ENCODE measurements at regions of chr20 and their contacts with region 1.

Region 1: GRCh38 chr20:58650776-58651558 is at the start of gene STX16:
- DNase-seq: peak; percentile 76 to 95 (median 86)
- ATAC-seq: peak; percentile 66
- H3K4me3 ChIP-seq: peak within 1 kb of the TSS; percentile 74
- H3K4me3 Mint-ChIP-seq: peak within 1 kb of the TSS; percentile 99
- H3K27ac ChIP-seq: peak within 1 kb of the TSS; percentile 91 to 93
- H3K27ac Mint-ChIP-seq: peak within 1 kb of the TSS; percentile 100
- H3K4me1 ChIP-seq: peaks cover 37% of the 10 kb centered on the region
- H3K4me1 Mint-ChIP-seq: peaks cover 28% of the 10 kb centered on the region
- H3K27me3 ChIP-seq: no peaks in the 10 kb centered on the region
- H3K27me3 Mint-ChIP-seq: no peaks in the 10 kb centered on the region
- CTCF ChIP-seq: peak; percentile 76
- total RNA-seq, gene STX16: 179 to 181 TPM

Region 2: GRCh38 chr20:57351042-57351783 is 1299.8 kb before region 1 on chr20 and contains the start of gene RAE1:
- CTCF ChIA-PET with region 1: no interaction called
- POLR2A ChIA-PET with region 1: no interaction called
- intact Hi-C with region 1: loop called in 1 of 2 experiments (anchors 5 kb)
- DNase-seq: peak; percentile 82 to 97 (median 89)
- ATAC-seq: peak; percentile 82
- H3K4me3 ChIP-seq: peak within 1 kb of the TSS; percentile 98
- H3K4me3 Mint-ChIP-seq: peak within 1 kb of the TSS; percentile 94
- H3K27ac ChIP-seq: peak within 1 kb of the TSS; percentile 73 to 74
- H3K27ac Mint-ChIP-seq: peak within 1 kb of the TSS; percentile 89
- H3K4me1 ChIP-seq: peaks cover 21% of the 10 kb centered on the region
- H3K4me1 Mint-ChIP-seq: peaks cover 55% of the 10 kb centered on the region
- H3K27me3 ChIP-seq: no peaks in the 10 kb centered on the region
- H3K27me3 Mint-ChIP-seq: no peaks in the 10 kb centered on the region
- CTCF ChIP-seq: no peak
- total RNA-seq, gene RAE1: 58.8 to 60.7 TPM

Region 3: DNA sequence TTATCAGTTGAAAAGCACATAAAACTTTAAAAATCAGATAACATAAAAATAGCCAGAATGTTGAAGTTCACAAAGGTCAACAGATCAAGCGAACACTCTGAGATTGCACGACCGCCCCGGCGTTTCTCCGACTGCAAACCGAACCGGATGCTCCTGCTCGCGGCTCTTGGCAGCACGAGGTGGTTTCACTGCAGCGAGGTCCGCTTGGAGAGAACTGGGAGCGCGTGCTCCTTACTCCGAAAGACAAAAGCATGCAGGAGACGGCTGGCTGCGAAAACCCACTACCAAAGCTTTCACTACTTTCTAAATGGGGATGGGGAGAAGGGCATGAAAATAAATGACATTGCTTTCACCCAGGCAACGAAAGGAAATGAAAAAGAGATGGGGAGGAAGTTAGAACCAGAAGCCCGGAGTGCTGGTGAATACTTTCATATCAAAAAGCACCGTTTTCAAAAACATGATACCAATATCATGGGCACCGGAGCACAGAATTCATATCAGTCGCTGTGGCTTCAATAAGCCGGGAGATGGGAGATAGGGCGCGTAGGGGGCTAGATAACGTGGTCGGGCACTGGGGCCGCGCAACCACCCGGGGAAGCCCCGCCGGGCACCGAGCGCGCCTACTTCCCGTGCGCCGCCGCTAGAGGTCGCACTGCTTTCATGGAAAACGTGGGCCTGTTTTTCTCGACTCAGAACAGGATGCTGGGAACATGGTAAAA is 414.2 kb before region 1 on chr20:
- CTCF ChIA-PET with region 1: no interaction called
- POLR2A ChIA-PET with region 1: interaction called, 6 read pairs
- intact Hi-C with region 1: loop called (anchors 2 to 5 kb)
- DNase-seq: peak; percentile 66 to 90 (median 82)
- ATAC-seq: peak; percentile 87
- H3K4me3 ChIP-seq: peak overlapping the region; percentile 71
- H3K4me3 Mint-ChIP-seq: peak overlapping the region; percentile 88
- H3K27ac ChIP-seq: peak overlapping the region; percentile 58 to 66
- H3K27ac Mint-ChIP-seq: peak overlapping the region; percentile 77
- H3K4me1 ChIP-seq: peaks cover 9% of the 10 kb centered on the region
- H3K4me1 Mint-ChIP-seq: peaks cover 13% of the 10 kb centered on the region
- H3K27me3 ChIP-seq: no peaks in the 10 kb centered on the region
- H3K27me3 Mint-ChIP-seq: no peaks in the 10 kb centered on the region
- CTCF ChIP-seq: peak; percentile 99

Region 4: DNA sequence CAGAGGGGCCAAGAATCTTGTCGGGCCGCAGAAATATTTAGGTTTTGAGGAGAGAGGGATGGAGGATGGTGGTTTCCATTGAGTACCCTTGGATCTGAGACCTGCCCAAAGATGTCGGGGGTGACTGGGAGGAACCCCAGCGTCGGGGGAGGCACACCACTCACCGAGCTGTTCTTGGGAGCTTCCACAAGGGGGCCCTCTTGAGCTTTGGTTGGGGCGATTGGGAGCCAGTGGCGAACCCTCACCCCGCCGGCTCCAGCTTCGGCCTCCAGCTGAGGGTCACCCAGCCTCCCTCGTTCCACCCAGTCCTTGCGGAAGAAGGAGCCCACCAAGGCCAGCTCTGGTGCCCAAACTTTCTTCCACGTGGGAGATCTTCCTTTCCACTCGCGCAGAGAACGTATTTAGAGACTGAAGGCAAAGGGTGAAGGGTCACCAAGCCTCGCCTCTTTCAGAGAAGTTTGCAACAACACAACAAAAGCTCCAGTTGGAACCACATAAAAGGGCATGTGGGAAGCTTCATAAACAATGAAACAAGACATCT is 169.4 kb before region 1 on chr20:
- CTCF ChIA-PET with region 1: interaction called, 10 read pairs
- POLR2A ChIA-PET with region 1: no interaction called
- intact Hi-C with region 1: no loop called
- DNase-seq: peak in 13 of 14 experiments; percentile 4 to 80 (median 54)
- ATAC-seq: no peak
- H3K4me3 ChIP-seq: no peak overlapping the region
- H3K4me3 Mint-ChIP-seq: no peak overlapping the region
- H3K27ac ChIP-seq: no peak overlapping the region
- H3K27ac Mint-ChIP-seq: no peak overlapping the region
- H3K4me1 ChIP-seq: peaks cover 6% of the 10 kb centered on the region
- H3K4me1 Mint-ChIP-seq: no peaks in the 10 kb centered on the region
- H3K27me3 ChIP-seq: no peaks in the 10 kb centered on the region
- H3K27me3 Mint-ChIP-seq: peaks cover 37% of the 10 kb centered on the region
- CTCF ChIP-seq: no peak

Region 5: GRCh38 chr20:58839474-58839874 is 188.5 kb after region 1 on chr20:
- CTCF ChIA-PET with region 1: interaction called, 5 read pairs
- POLR2A ChIA-PET with region 1: interaction called, 4 read pairs
- intact Hi-C with region 1: loop called in 1 of 2 experiments (anchors 5 kb)
- DNase-seq: peak in 12 of 14 experiments; percentile 19 to 68 (median 42)
- ATAC-seq: peak; percentile 64
- H3K4me3 ChIP-seq: peak overlapping the region; percentile 19
- H3K4me3 Mint-ChIP-seq: no peak overlapping the region
- H3K27ac ChIP-seq: no peak overlapping the region
- H3K27ac Mint-ChIP-seq: no peak overlapping the region
- H3K4me1 ChIP-seq: peaks cover 11% of the 10 kb centered on the region
- H3K4me1 Mint-ChIP-seq: peaks cover 5% of the 10 kb centered on the region
- H3K27me3 ChIP-seq: peaks cover 19 to 26% of the 10 kb centered on the region in 2 experiments
- H3K27me3 Mint-ChIP-seq: peaks cover 72% of the 10 kb centered on the region
- CTCF ChIP-seq: peak; percentile 20

Region 6: DNA sequence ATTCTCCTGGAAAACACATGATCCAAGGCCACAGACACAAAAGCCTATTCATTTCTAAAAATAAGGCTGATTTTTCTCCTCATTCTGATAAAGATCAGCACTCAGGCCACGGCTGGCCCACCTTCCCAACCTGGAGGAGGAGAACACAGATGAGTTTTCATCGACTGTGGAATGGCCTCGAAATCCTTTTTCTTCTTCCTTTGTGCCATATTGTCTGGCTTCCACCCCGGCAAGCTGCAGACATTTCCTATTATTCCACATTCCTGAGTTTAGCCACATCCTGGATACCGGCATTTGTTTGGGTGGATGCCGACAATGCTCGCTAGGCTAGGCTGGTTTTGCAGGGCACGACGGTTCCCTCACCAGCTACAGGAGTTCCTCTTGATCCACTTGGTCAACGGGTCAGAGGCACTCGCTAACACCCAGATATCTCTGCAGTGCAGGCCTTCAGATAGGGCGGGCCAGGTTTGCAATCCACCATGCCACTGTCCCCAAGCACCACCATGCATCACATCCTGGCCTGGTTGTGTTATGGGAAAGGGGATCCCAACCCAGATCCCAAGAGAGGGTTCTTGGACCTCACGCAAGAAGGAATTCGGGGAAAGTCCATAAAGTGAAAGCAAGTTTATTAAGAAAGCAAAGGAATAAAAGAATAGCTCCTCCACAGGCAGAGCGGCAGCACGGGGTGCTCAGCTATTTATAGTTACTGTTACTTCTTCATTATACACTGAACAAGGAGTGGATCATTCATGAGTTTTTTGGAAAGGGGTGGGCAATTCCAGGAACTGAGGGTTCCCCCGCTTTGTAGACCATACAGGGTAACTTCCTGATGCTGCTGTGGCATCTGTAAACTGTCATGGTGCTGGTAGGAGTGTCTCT is 360.3 kb after region 1 on chr20:
- CTCF ChIA-PET with region 1: no interaction called
- POLR2A ChIA-PET with region 1: no interaction called
- intact Hi-C with region 1: no loop called
- DNase-seq: no peak
- ATAC-seq: no peak
- H3K4me3 ChIP-seq: no peak overlapping the region
- H3K4me3 Mint-ChIP-seq: no peak overlapping the region
- H3K27ac ChIP-seq: no peak overlapping the region
- H3K27ac Mint-ChIP-seq: no peak overlapping the region
- H3K4me1 ChIP-seq: peaks cover 29% of the 10 kb centered on the region
- H3K4me1 Mint-ChIP-seq: peaks cover 27% of the 10 kb centered on the region
- H3K27me3 ChIP-seq: no peaks in the 10 kb centered on the region
- H3K27me3 Mint-ChIP-seq: no peaks in the 10 kb centered on the region
- CTCF ChIP-seq: no peak

Region 7: DNA sequence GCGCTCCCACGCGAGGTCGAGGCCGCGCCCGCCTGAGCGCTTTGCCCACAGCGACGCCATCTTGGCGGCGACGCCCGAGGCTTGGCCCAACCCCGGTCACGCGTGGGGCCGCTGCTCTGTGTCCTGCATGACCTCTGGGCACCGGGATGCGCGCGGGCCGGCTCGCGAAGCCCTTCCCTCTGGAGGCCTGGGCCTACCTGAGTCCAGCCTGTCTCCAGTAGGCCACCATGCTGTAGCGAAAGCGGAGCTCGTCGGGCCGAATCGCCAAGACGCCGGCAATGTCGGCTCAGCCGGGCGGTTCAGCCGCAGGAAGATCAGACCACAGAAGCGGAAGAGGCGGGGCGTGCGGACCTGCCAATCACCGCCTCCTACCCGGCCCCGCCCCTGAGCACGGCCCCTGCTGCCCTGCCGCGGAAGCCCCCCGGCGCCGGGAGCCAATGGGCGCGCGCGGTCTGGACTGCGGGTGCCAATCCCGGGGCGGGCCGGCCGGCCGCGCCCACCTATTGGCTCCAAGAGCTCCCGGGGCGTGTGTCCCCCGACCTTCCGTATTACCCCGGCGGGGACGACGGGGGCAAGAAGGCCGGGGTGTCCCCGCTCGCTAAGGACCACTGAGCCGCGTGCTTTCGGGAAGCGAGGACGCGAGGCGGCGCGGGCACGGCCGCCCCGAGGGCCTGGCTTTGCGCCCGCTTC is 381.2 kb after region 1 on chr20 and contains the start of gene ATP5F1E:
- CTCF ChIA-PET with region 1: no interaction called
- POLR2A ChIA-PET with region 1: interaction called, 27 read pairs
- intact Hi-C with region 1: no loop called
- DNase-seq: peak; percentile 94 to 99 (median 96)
- ATAC-seq: peak; percentile 95
- H3K4me3 ChIP-seq: peak within 1 kb of the TSS; percentile 76
- H3K4me3 Mint-ChIP-seq: peak within 1 kb of the TSS; percentile 97
- H3K27ac ChIP-seq: peak within 1 kb of the TSS; percentile 81 to 86
- H3K27ac Mint-ChIP-seq: peak within 1 kb of the TSS; percentile 87
- H3K4me1 ChIP-seq: peaks cover 31% of the 10 kb centered on the region
- H3K4me1 Mint-ChIP-seq: peaks cover 61% of the 10 kb centered on the region
- H3K27me3 ChIP-seq: no peaks in the 10 kb centered on the region
- H3K27me3 Mint-ChIP-seq: no peaks in the 10 kb centered on the region
- CTCF ChIP-seq: no peak
- total RNA-seq, gene ATP5F1E: 51.1 to 53.1 TPM

Region 8: DNA sequence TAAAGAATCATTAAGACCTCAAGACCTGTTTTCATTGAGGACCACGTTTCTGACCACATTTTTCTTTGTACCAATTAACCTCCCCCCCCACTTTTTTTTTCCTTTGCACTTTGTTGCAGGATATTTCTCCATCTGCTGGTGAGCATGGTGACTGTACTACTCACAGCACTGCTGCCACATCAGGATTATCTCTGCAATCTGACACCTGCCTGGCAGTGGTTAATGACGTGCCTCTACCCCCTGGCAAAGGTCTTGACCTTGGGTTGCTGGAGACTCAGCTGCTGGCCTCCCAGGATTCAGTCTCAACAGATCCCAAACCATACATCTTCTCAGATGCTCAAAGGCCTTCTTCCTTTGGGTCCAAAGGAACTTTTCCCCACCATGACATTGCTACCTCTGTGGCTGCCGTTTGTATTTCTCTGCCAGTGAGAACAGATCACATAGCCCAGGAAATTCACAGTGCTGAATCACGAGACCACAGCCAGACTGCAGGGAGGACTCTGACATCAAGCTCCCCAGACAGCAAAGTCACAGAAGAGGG is 602.9 kb after region 1 on chr20:
- CTCF ChIA-PET with region 1: no interaction called
- POLR2A ChIA-PET with region 1: interaction called, 13 read pairs
- intact Hi-C with region 1: no loop called
- DNase-seq: peak in 12 of 14 experiments; percentile 11 to 64 (median 30)
- ATAC-seq: peak; percentile 63
- H3K4me3 ChIP-seq: no peak overlapping the region
- H3K4me3 Mint-ChIP-seq: peak overlapping the region; percentile 78
- H3K27ac ChIP-seq: peak overlapping the region; percentile 46 to 51
- H3K27ac Mint-ChIP-seq: peak overlapping the region; percentile 94
- H3K4me1 ChIP-seq: peaks cover 28% of the 10 kb centered on the region
- H3K4me1 Mint-ChIP-seq: peaks cover 82% of the 10 kb centered on the region
- H3K27me3 ChIP-seq: no peaks in the 10 kb centered on the region
- H3K27me3 Mint-ChIP-seq: no peaks in the 10 kb centered on the region
- CTCF ChIP-seq: no peak

Measured in CD4-positive, alpha-beta T cell (primary cell).